ENCODE measurements at regions of chr17 and their contacts with region 1.

Region 1: GRCh38 chr17:82065638-82066303 is at the start of gene DUS1L:
- DNase-seq: peak; percentile 90
- ATAC-seq: peak; percentile 83
- H3K4me3 Mint-ChIP-seq: peak within 1 kb of the TSS; percentile 87
- H3K27ac Mint-ChIP-seq: peak within 1 kb of the TSS; percentile 84
- H3K4me1 Mint-ChIP-seq: peaks cover 5% of the 10 kb centered on the region
- H3K27me3 Mint-ChIP-seq: peaks cover 2% of the 10 kb centered on the region
- total RNA-seq, gene DUS1L: 126 to 130 TPM

Region 2: GRCh38 chr17:82037113-82037888 is 28.5 kb before region 1 on chr17 and contains the start of gene DCXR:
- POLR2A ChIA-PET with region 1: interaction called, 11 read pairs
- DNase-seq: peak; percentile 99
- ATAC-seq: peak; percentile 95
- H3K4me3 Mint-ChIP-seq: peak within 1 kb of the TSS; percentile 91
- H3K27ac Mint-ChIP-seq: peak within 1 kb of the TSS; percentile 95
- H3K4me1 Mint-ChIP-seq: peaks cover 20% of the 10 kb centered on the region
- H3K27me3 Mint-ChIP-seq: no peaks in the 10 kb centered on the region
- total RNA-seq, gene DCXR: 110 to 115 TPM

Region 3: GRCh38 chr17:82098072-82098821 is 32.5 kb after region 1 on chr17 and contains the start of gene FASN:
- POLR2A ChIA-PET with region 1: interaction called, 12 read pairs
- DNase-seq: peak; percentile 95
- ATAC-seq: peak; percentile 80
- H3K4me3 Mint-ChIP-seq: peak within 1 kb of the TSS; percentile 77
- H3K27ac Mint-ChIP-seq: peak within 1 kb of the TSS; percentile 69
- H3K4me1 Mint-ChIP-seq: peaks cover 5% of the 10 kb centered on the region
- H3K27me3 Mint-ChIP-seq: no peaks in the 10 kb centered on the region
- total RNA-seq, gene FASN: 154 to 163 TPM